Ascending aorta (tissue), 2 donors: ENCODE measurements at regions of chr10 and their contacts with region 1.

Region 1: GRCh38 chr10:90912174-90912573 is 8.7 kb downstream of the ANKRD1 start:
- DNase-seq: no peak
- H3K4me3 ChIP-seq: no peak overlapping the region
- H3K27ac ChIP-seq: no peak overlapping the region
- H3K4me1 ChIP-seq: peaks cover 0 to 3% of the 10 kb centered on the region in 2 donors
- H3K27me3 ChIP-seq: no peaks in the 10 kb centered on the region
- CTCF ChIP-seq: no peak

Region 2: DNA sequence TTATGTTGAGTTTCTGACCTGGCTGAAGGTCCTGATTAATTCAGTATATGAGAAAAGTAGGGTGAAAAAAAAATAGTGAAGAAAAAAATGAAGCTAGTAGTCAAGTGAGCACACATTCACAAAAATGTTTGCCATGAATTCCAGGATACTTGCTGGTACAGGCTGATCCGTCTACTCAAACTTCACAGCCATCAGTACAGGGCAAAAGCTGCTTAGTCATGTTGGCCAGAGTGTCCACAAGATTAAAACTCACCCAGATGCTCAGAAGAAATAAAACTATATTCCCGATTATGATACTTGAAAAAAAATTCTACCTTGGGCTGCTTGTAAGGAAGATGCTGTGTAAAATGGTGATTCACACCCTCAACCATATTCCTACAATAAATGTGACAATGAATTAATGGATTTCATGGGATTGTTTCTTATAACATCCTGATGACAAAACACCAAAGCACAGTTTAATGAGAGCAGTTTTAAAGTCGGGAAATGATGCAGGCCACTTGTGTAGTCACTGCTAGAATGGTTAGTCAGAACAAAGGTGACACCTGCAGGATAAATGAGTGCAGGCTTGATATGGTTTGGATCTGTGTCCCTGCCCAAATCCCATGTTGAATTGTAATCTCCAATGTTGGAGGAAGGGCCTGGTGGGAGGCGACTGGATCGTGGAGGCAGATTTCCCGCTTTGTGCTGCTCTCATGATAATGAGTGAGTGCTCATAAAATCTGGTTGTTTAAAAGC is 57.9 kb after region 1 on chr10:
- intact Hi-C with region 1: loop called (anchors 1 kb)
- DNase-seq: no peak
- H3K4me3 ChIP-seq: no peak overlapping the region
- H3K27ac ChIP-seq: peak overlapping the region; percentile 34 to 63
- H3K4me1 ChIP-seq: peaks cover 0 to 6% of the 10 kb centered on the region in 2 donors
- H3K27me3 ChIP-seq: no peaks in the 10 kb centered on the region
- CTCF ChIP-seq: no peak